GM12878 (cell line): ENCODE measurements at regions of chr6 and their contacts with region 1.

Region 1: GRCh38 chr6:155174576-155175211 is 89.1 kb upstream of the CLDN20 start:
- DNase-seq: no peak
- ATAC-seq: peak; percentile 72
- H3K4me3 ChIP-seq: no peak overlapping the region
- H3K27ac ChIP-seq: no peak overlapping the region
- H3K4me1 ChIP-seq: peaks cover 25% of the 10 kb centered on the region
- H3K27me3 ChIP-seq: no peaks in the 10 kb centered on the region
- CTCF ChIP-seq: peak; percentile 56 to 80 (median 71); a peak in 5 of 6 replicates
- EP300 ChIP-seq: no peak
- POLR2A ChIP-seq: no peak
- RAD21 ChIP-seq: peak; percentile 93

Region 2: DNA sequence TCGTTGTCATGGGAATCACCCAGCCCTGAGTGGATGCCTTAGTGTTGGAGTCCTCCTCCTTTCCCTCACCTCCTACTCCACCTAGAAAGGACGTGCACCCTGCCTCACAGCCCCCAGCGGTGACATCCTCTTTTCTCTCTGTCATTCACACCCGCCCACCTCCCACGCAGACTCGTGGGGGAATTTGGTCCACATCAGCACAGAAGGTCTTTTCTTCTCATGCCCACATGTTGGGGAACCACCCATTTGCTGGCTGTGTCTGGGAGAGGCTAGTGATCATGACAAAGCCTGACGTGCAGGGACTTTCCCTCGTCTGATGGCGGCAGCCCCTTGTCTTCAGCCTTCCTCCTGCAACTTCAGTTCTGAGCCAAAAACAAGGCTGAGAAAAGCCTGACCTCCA is 568.2 kb before region 1 on chr6:
- CTCF ChIA-PET with region 1: interaction called, 4 read pairs
- POLR2A ChIA-PET with region 1: no interaction called
- RAD21 ChIA-PET with region 1: interaction called, 3 read pairs
- SMC1A ChIA-PET with region 1: no interaction called
- in situ Hi-C with region 1: no loop called
- intact Hi-C with region 1: loop called (anchors 10 kb)
- DNase-seq: peak; percentile 93
- ATAC-seq: peak; percentile 82
- H3K4me3 ChIP-seq: no peak overlapping the region; the same call in 1 of the 2 replicates
- H3K27ac ChIP-seq: peak overlapping the region; percentile 73
- H3K4me1 ChIP-seq: peaks cover 31% of the 10 kb centered on the region
- H3K27me3 ChIP-seq: no peaks in the 10 kb centered on the region
- CTCF ChIP-seq: 0 out of 6 replicates have a peak, but pooled peaks of 1 of the 3 experiments have one; percentile 7
- EP300 ChIP-seq: peak; percentile 90 to 98; a peak in 3 of 4 replicates
- POLR2A ChIP-seq: peak; percentile 64
- RAD21 ChIP-seq: no peak; the same call in 1 of the 2 replicates

Region 3: DNA sequence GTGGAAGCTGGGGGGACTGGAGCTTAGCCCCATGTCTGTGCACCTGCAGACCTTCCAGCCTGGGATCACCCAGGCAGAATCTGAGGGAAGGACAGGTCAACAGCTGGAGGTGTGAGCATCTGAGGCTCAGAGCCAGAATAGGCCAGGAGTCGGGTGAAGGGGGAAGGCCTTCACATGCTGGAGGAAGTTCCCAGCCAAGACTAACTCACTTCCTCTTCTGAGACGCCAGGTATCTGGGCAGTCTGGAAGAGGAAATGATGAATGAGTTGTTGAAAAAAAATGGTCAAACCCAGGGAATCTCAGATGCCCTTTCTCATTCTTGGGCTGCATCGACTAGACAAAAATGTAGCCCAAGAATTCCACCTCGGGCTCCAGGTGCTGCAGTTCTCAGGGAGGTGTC is 253.2 kb before region 1 on chr6:
- CTCF ChIA-PET with region 1: interaction called, 206 read pairs
- POLR2A ChIA-PET with region 1: interaction called, 4 read pairs
- RAD21 ChIA-PET with region 1: interaction called, 116 read pairs
- SMC1A ChIA-PET with region 1: interaction called, 150 read pairs
- in situ Hi-C with region 1: no loop called
- intact Hi-C with region 1: no loop called
- DNase-seq: no peak
- ATAC-seq: peak; percentile 73
- H3K4me3 ChIP-seq: no peak overlapping the region
- H3K27ac ChIP-seq: no peak overlapping the region
- H3K4me1 ChIP-seq: no peaks in the 10 kb centered on the region
- H3K27me3 ChIP-seq: no peaks in the 10 kb centered on the region
- CTCF ChIP-seq: no peak
- EP300 ChIP-seq: no peak
- POLR2A ChIP-seq: no peak
- RAD21 ChIP-seq: no peak

Region 4: GRCh38 chr6:155079985-155080452 is 94.7 kb before region 1 on chr6:
- CTCF ChIA-PET with region 1: interaction called, 3 read pairs
- POLR2A ChIA-PET with region 1: interaction called, 3 read pairs
- RAD21 ChIA-PET with region 1: interaction called, 5 read pairs
- SMC1A ChIA-PET with region 1: interaction called, 11 read pairs
- in situ Hi-C with region 1: no loop called
- intact Hi-C with region 1: loop called (anchors 1 kb)
- DNase-seq: peak; percentile 25
- ATAC-seq: peak; percentile 78
- H3K4me3 ChIP-seq: no peak overlapping the region
- H3K27ac ChIP-seq: no peak overlapping the region
- H3K4me1 ChIP-seq: no peaks in the 10 kb centered on the region; the same call in 1 of the 2 replicates
- H3K27me3 ChIP-seq: no peaks in the 10 kb centered on the region
- CTCF ChIP-seq: no peak
- EP300 ChIP-seq: no peak
- POLR2A ChIP-seq: no peak
- RAD21 ChIP-seq: no peak

Region 5: DNA sequence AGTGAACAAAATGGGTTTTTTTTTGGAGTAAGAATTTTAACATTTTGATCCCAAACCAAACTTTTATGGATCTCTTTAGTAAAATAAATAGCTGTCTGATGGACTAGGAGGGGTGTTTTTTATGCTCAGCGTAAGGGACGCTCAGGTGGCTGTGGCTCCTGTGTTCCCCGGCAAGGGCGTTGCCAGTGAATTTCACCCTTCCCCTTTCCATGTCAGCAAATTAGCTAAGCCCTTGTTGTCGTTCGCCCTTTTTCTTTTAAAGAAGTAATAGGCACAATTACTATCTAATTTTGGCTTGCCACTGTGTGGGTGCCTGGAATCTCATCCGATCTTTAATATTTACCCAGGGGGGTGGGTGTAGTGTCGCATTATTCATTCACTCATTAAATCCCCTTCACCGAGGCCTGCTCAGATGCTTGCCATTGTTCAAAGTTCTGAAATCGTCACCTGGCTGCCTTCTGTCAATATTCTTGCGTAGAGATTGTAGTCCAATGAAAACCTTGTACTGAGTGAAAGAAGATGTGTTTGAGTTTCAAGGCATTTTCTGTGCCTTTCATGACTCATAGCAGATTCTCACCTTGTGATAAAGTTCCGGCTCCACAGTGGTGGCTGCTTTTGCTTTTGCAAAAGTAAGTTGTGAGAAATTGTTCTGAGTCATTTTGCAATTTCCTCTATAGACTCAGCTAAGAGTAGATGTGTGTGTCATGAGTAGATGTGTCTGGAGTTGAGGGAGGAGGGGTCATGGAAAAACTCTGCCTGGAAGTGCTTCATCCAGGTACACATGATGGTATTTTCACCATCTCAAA is 49.2 kb after region 1 on chr6:
- CTCF ChIA-PET with region 1: interaction called, 23 read pairs
- POLR2A ChIA-PET with region 1: interaction called, 5 read pairs
- RAD21 ChIA-PET with region 1: interaction called, 17 read pairs
- SMC1A ChIA-PET with region 1: interaction called, 23 read pairs
- in situ Hi-C with region 1: no loop called
- intact Hi-C with region 1: no loop called
- DNase-seq: peak; percentile 81
- ATAC-seq: peak; percentile 99
- H3K4me3 ChIP-seq: no peak overlapping the region
- H3K27ac ChIP-seq: peak overlapping the region; percentile 15; the same call in 1 of the 2 replicates
- H3K4me1 ChIP-seq: peaks cover 15% of the 10 kb centered on the region
- H3K27me3 ChIP-seq: no peaks in the 10 kb centered on the region
- CTCF ChIP-seq: no peak
- EP300 ChIP-seq: peak; percentile 39 to 84; a peak in 2 of 4 replicates
- POLR2A ChIP-seq: no peak
- RAD21 ChIP-seq: no peak

Region 6: GRCh38 chr6:155259204-155259603 is 84.5 kb after region 1 on chr6:
- CTCF ChIA-PET with region 1: interaction called, 6 read pairs
- POLR2A ChIA-PET with region 1: interaction called, 4 read pairs
- RAD21 ChIA-PET with region 1: interaction called, 5 read pairs
- SMC1A ChIA-PET with region 1: interaction called, 10 read pairs
- in situ Hi-C with region 1: loop called (anchors 5 kb)
- intact Hi-C with region 1: no loop called
- DNase-seq: no peak
- ATAC-seq: no peak
- H3K4me3 ChIP-seq: no peak overlapping the region
- H3K27ac ChIP-seq: no peak overlapping the region
- H3K4me1 ChIP-seq: peaks cover 17% of the 10 kb centered on the region
- H3K27me3 ChIP-seq: no peaks in the 10 kb centered on the region
- CTCF ChIP-seq: no peak
- EP300 ChIP-seq: no peak
- POLR2A ChIP-seq: no peak
- RAD21 ChIP-seq: no peak

Region 7: DNA sequence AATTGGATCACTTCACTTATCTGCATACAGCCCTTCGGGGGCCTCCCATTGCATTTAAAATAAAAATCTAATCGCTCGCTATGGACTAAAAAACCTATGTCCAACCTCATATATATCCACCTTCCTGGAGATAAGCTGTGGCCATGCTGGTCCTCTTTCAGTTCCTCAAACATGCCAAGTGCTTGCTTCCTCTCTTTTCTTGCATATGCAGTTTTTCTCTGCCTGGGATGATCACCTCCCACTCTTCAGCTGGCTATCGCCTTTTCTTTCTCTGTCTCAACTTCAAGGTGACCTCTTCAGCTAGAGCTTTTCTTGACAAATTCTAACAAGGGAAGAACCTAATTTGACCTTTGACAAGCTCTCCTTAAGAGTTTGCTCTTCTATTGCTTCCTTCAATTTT is 145.2 kb after region 1 on chr6:
- CTCF ChIA-PET with region 1: interaction called, 54 read pairs
- POLR2A ChIA-PET with region 1: interaction called, 4 read pairs
- RAD21 ChIA-PET with region 1: interaction called, 54 read pairs
- SMC1A ChIA-PET with region 1: interaction called, 51 read pairs
- in situ Hi-C with region 1: no loop called
- intact Hi-C with region 1: loop called (anchors 2 kb)
- DNase-seq: no peak
- ATAC-seq: no peak
- H3K4me3 ChIP-seq: no peak overlapping the region
- H3K27ac ChIP-seq: no peak overlapping the region
- H3K4me1 ChIP-seq: no peaks in the 10 kb centered on the region; the same call in 1 of the 2 replicates
- H3K27me3 ChIP-seq: no peaks in the 10 kb centered on the region
- CTCF ChIP-seq: no peak
- EP300 ChIP-seq: no peak
- POLR2A ChIP-seq: no peak
- RAD21 ChIP-seq: no peak

Region 8: DNA sequence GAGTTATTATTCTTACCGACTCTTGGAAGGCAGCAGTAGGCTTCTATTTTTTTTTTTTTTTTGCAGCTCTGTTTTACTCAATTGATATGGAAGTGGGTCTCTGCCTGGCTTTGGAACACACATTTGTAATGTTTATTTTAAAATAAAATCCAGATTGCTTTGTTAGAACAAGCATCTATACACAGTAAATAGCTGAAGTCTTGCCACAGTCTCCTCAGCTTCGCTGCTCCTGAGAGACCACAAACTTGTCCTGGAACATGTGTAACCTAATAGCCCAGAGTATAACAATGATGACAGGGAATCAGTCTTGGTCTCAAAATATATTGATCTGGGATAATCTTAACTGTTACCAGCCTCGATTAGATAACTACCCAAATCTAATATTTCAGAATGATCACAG is 580.8 kb after region 1 on chr6:
- CTCF ChIA-PET with region 1: no interaction called
- POLR2A ChIA-PET with region 1: no interaction called
- RAD21 ChIA-PET with region 1: no interaction called
- SMC1A ChIA-PET with region 1: no interaction called
- in situ Hi-C with region 1: no loop called
- intact Hi-C with region 1: no loop called
- DNase-seq: no peak
- ATAC-seq: no peak
- H3K4me3 ChIP-seq: no peak overlapping the region
- H3K27ac ChIP-seq: no peak overlapping the region
- H3K4me1 ChIP-seq: no peaks in the 10 kb centered on the region
- H3K27me3 ChIP-seq: no peaks in the 10 kb centered on the region
- CTCF ChIP-seq: no peak
- EP300 ChIP-seq: no peak
- POLR2A ChIP-seq: no peak
- RAD21 ChIP-seq: no peak